A549 (cell line): ENCODE measurements at regions of chr2 and their contacts with region 1.

Region 1: DNA sequence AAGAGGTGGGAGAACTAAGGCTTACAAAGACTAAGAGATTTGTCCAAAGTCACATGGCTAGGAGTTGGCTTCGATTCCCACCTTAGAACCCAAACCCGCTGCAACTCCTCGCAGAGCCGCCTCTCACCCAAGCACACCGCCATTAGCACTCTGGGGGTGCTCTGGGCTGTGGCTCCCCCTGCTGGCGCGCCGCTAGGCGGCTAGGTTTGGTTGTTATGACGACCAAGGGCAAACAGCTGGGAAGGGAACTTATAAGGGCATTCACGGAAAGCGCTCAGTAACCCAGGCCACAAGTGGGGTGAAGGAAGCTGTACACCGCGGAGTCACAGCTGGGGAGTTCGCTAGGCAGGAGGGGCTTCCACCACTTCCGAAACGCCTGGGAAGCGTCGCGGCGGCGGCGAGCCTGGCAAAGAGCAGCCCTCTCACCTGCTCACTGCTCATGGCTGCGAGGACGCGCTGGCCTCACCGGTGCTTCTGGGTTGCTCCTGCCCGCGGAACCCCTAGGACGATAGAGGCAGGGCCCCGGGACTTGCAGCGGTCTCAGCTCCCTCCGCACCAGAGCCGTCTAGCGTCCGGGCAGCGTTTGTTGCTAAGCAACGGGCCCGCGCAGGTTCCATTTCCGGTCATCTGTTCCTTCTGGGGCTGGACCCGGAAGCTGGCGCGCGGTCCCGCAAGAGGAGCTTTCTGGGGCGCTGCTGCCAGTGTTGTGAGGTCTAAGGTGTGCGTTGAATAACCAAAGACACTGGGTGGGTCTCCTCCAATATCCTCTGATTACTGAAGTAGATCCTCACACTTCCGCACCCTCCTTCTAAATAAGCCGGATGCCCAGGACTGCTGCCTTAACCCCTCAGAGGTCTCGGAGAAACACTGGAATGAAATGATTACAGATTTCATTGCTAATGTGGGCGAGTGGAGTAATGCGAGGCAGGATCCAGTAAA is at the start of gene DNAH7:
- DNase-seq: peak; percentile 88 to 90
- ATAC-seq: peak; percentile 98
- H3K4me3 ChIP-seq: peak within 1 kb of the TSS; percentile 67
- H3K27ac ChIP-seq: peak within 1 kb of the TSS; percentile 69 to 84
- H3K4me1 ChIP-seq: peaks cover 13% of the 10 kb centered on the region; the same call in 2 of the 3 replicates
- CTCF ChIP-seq: peak; percentile 62
- EP300 ChIP-seq: no peak
- POLR2A ChIP-seq: peak; percentile 68
- RAD21 ChIP-seq: peak; percentile 56 to 62
- polyA plus RNA-seq, gene DNAH7: 1.5 and 1.7 TPM in 2 replicates

Region 2: GRCh38 chr2:195561203-195562032 is 507.1 kb before region 1 on chr2:
- CTCF ChIA-PET with region 1: no interaction called
- POLR2A ChIA-PET with region 1: interaction called, 11 read pairs
- DNase-seq: peak; percentile 36 to 75
- ATAC-seq: peak; percentile 73 to 76
- H3K4me3 ChIP-seq: no peak overlapping the region
- H3K27ac ChIP-seq: peak overlapping the region; percentile 77 to 92
- H3K4me1 ChIP-seq: peaks cover 68% of the 10 kb centered on the region
- CTCF ChIP-seq: no peak
- EP300 ChIP-seq: no peak
- POLR2A ChIP-seq: no peak
- RAD21 ChIP-seq: no peak

Region 3: DNA sequence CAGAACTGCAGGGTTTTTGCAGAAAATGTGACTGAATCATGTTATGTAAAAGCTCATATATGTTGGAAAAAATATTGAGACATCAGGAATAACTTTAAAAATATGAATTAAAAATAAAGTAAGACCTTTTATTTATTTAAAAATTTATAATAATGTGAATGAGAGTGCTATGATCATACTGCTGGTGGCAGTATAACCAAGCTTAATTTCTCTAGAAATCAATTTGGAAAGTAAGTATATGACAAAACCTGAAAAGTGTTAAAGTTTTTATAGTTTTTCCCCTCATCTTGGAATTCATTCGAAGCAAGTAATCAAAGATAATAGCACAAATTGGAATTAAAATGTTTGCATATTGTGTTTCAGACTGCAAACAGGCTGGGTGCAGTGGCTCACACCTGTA is 404.0 kb before region 1 on chr2:
- CTCF ChIA-PET with region 1: interaction called, 10 read pairs
- POLR2A ChIA-PET with region 1: interaction called, 3 read pairs
- DNase-seq: no peak
- ATAC-seq: no peak
- H3K4me3 ChIP-seq: no peak overlapping the region
- H3K27ac ChIP-seq: no peak overlapping the region
- H3K4me1 ChIP-seq: peaks cover 35% of the 10 kb centered on the region
- CTCF ChIP-seq: peak; percentile 40; the same call in 2 of the 3 replicates
- EP300 ChIP-seq: no peak
- POLR2A ChIP-seq: no peak
- RAD21 ChIP-seq: peak; percentile 41 to 54; a peak in 4 of 5 replicates

Region 4: DNA sequence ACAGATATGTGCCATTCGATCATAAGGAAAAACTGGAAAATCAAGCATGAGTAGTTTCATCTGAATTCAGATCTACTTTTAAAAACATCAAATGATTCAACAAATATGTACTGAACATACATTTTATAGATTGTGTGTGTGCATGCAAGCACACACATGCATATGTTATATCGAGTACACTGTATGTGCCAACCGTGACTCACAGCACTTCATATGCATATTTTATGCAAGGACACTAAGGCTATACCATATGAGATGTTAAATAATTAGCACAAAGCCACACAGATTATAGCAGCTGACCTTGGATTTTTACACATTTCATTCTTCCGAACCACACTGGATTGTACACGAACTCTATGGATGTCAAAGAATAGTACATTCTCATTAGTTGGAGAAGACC is 161.1 kb before region 1 on chr2:
- CTCF ChIA-PET with region 1: no interaction called
- POLR2A ChIA-PET with region 1: no interaction called
- DNase-seq: no peak
- ATAC-seq: no peak
- H3K4me3 ChIP-seq: no peak overlapping the region
- H3K27ac ChIP-seq: no peak overlapping the region
- H3K4me1 ChIP-seq: no peaks in the 10 kb centered on the region
- CTCF ChIP-seq: no peak
- EP300 ChIP-seq: no peak
- POLR2A ChIP-seq: no peak
- RAD21 ChIP-seq: no peak

Region 5: DNA sequence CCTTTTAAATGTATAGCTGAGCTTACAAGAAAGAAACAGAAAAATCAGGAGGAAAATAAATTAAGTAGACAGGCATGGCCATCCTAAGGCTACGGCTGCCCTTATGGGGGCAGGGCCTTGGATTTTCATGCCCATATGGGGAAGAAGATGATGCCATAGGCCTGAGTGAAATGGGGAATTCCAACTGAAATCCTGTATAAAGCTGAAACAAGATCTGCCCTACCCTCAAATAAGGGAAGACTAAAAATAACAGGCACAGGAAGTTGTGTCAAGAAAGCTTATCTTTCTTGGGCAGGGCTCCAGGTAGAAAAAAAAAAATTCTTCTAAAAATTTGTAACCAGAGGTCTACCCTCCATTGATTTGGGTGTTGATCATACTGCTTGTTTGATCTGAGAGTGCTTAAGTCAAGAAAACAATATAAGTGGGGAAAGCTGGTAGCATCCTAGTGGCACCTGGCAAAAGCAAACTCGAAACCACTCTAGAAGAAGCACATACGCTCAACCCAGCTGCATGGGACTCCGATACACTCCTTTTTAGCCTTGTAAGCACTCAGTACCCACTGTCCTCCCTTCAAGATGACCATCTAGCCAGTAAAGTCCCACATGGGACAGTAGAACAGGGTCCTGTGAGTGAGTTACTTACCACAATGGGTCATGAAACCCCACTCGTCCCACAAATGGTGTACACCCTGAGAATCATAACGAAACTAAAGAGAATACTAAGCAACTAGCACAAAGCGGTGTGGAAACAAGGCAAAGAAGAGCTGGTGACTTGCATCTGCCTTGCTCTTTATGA is 22.2 kb before region 1 on chr2:
- CTCF ChIA-PET with region 1: interaction called, 15 read pairs
- POLR2A ChIA-PET with region 1: no interaction called
- DNase-seq: no peak
- ATAC-seq: no peak
- H3K4me3 ChIP-seq: no peak overlapping the region
- H3K27ac ChIP-seq: no peak overlapping the region
- H3K4me1 ChIP-seq: no peaks in the 10 kb centered on the region
- CTCF ChIP-seq: no peak
- EP300 ChIP-seq: no peak
- POLR2A ChIP-seq: no peak
- RAD21 ChIP-seq: no peak

Region 6: DNA sequence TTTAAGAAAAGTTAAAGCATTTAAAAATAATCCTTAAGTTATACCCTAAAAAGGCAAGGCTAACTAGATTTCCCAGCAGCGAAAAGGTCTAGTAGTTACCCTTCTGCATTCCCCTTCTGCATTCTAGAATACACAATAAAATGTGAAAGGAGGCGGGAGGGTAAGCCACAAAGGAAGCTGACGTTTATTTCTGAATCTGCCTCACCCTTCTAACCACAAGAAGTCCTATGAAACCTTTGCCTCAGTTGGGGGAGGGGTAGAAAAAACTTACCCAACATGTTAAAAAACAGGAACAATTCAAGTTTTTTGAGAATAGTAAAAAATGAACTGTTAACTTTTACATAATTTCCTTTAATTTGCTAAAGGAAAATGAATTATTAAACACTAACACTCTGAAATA is 91.6 kb after region 1 on chr2:
- CTCF ChIA-PET with region 1: no interaction called
- POLR2A ChIA-PET with region 1: no interaction called
- DNase-seq: peak in 1 of 2 experiments; percentile 53
- ATAC-seq: no peak
- H3K4me3 ChIP-seq: no peak overlapping the region
- H3K27ac ChIP-seq: no peak overlapping the region
- H3K4me1 ChIP-seq: peaks cover 10% of the 10 kb centered on the region; the same call in 2 of the 3 replicates
- CTCF ChIP-seq: no peak
- EP300 ChIP-seq: no peak
- POLR2A ChIP-seq: no peak
- RAD21 ChIP-seq: no peak